ENCODE measurements at regions of chr2 and their contacts with region 1.

Region 1: DNA sequence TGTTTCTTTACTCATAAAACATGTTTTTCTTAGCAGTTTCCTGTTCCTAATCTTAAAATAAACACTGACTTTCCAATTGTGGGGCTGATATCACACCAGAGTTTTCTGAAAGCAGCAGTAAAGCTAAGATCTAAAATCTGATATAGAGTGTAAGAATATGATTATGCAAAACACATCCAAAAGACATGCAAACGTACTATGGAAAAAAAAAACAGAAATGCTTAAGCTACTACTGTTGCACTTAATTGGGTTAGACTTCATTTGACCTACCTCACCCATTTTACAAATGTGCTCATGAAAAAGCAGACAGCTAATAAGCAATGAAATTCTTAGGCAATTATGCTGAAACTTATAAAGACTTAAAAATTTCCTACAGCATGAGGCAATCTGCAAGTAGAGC is 10.5 kb downstream of the CYTIP start:
- DNase-seq: no peak
- H3K4me3 Mint-ChIP-seq: peak overlapping the region; percentile 91
- H3K27ac Mint-ChIP-seq: peak overlapping the region; percentile 80
- H3K4me1 Mint-ChIP-seq: peaks cover 78% of the 10 kb centered on the region
- H3K27me3 Mint-ChIP-seq: no peaks in the 10 kb centered on the region

Region 2: GRCh38 chr2:157367704-157368103 is 65.7 kb before region 1 on chr2:
- CTCF ChIA-PET with region 1: no interaction called
- POLR2A ChIA-PET with region 1: no interaction called
- DNase-seq: no peak
- H3K4me3 Mint-ChIP-seq: no peak overlapping the region
- H3K27ac Mint-ChIP-seq: no peak overlapping the region
- H3K4me1 Mint-ChIP-seq: peaks cover 12% of the 10 kb centered on the region
- H3K27me3 Mint-ChIP-seq: no peaks in the 10 kb centered on the region

Region 3: GRCh38 chr2:157404363-157404762 is 29.0 kb before region 1 on chr2:
- CTCF ChIA-PET with region 1: no interaction called
- POLR2A ChIA-PET with region 1: interaction called, 380 read pairs
- DNase-seq: peak; percentile 67
- H3K4me3 Mint-ChIP-seq: peak overlapping the region; percentile 50
- H3K27ac Mint-ChIP-seq: peak overlapping the region; percentile 87
- H3K4me1 Mint-ChIP-seq: peaks cover 64% of the 10 kb centered on the region
- H3K27me3 Mint-ChIP-seq: no peaks in the 10 kb centered on the region

Region 4: GRCh38 chr2:157557770-157558169 is 124.4 kb after region 1 on chr2:
- CTCF ChIA-PET with region 1: no interaction called
- POLR2A ChIA-PET with region 1: no interaction called
- DNase-seq: no peak
- H3K4me3 Mint-ChIP-seq: no peak overlapping the region
- H3K27ac Mint-ChIP-seq: peak overlapping the region; percentile 40
- H3K4me1 Mint-ChIP-seq: peaks cover 26% of the 10 kb centered on the region
- H3K27me3 Mint-ChIP-seq: no peaks in the 10 kb centered on the region

Region 5: DNA sequence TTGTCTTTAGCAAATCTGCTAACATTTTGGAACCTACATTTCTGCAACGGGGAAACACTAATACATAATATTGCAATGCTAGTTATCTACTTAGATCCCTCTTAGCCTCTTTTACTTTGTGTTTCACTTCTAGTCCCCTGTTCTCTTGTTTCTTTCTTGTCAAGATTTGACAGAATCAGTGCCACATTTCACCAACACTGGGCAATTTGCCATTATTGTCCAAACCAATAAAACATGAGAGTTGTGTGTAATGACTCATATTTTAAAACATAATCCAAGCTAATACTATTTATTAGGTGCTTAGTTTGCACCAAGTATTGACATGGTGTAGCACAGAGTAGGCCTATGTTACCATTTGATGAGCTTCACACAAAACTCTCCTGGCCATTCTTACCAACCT is 229.0 kb after region 1 on chr2:
- CTCF ChIA-PET with region 1: no interaction called
- POLR2A ChIA-PET with region 1: no interaction called
- DNase-seq: no peak
- H3K4me3 Mint-ChIP-seq: no peak overlapping the region
- H3K27ac Mint-ChIP-seq: no peak overlapping the region
- H3K4me1 Mint-ChIP-seq: no peaks in the 10 kb centered on the region
- H3K27me3 Mint-ChIP-seq: no peaks in the 10 kb centered on the region

Region 6: DNA sequence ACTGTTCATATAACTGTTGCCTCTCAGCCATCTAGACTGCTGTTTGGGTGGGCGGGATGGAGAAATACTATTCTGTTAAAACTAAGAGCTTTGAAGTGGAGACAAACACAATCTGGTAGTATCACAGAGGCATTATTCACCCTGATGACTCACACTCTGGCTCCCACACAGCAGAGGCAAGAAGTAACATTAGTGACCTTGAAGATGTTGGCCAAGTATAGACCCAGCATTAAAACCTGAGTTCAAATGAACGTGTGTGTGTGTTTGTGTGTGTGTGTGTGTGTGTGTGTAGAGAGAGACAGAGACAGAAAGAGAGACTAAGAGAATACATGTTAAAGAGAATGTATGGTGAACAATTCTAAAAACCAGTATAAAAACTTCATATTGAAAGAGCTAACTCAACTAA is 465.2 kb after region 1 on chr2:
- CTCF ChIA-PET with region 1: no interaction called
- POLR2A ChIA-PET with region 1: interaction called, 39 read pairs
- DNase-seq: peak; percentile 61
- H3K4me3 Mint-ChIP-seq: peak overlapping the region; percentile 81
- H3K27ac Mint-ChIP-seq: peak overlapping the region; percentile 99
- H3K4me1 Mint-ChIP-seq: peaks cover 80% of the 10 kb centered on the region
- H3K27me3 Mint-ChIP-seq: no peaks in the 10 kb centered on the region

Measured in activated CD4-positive, alpha-beta memory T cell treated with anti-CD3 and anti-CD28 coated beads, Interleukin-2, amount 10 ng/mL, durations not matched to agents 7 days and 5 days (primary cell).